Activated CD8-positive, alpha-beta memory T cell treated with anti-CD3 and anti-CD28 coated beads, Interleukin-2, amount 10 ng/mL, durations not matched to agents 7 days and 5 days (primary cell): ENCODE measurements at regions of chr10 and their contacts with region 1.

Region 1: GRCh38 chr10:5623081-5623748 is 43.2 kb downstream of the ASB13 start:
- DNase-seq: peak; percentile 88
- ATAC-seq: peak; percentile 97
- H3K4me3 Mint-ChIP-seq: no peak overlapping the region
- H3K27ac Mint-ChIP-seq: no peak overlapping the region
- H3K4me1 Mint-ChIP-seq: peaks cover 18% of the 10 kb centered on the region
- H3K27me3 Mint-ChIP-seq: peaks cover 6% of the 10 kb centered on the region

Region 2: GRCh38 chr10:5423771-5424170 is 199.4 kb before region 1 on chr10:
- CTCF ChIA-PET with region 1: interaction called, 10 read pairs
- DNase-seq: no peak
- ATAC-seq: no peak
- H3K4me3 Mint-ChIP-seq: no peak overlapping the region
- H3K27ac Mint-ChIP-seq: no peak overlapping the region
- H3K4me1 Mint-ChIP-seq: peaks cover 2% of the 10 kb centered on the region
- H3K27me3 Mint-ChIP-seq: no peaks in the 10 kb centered on the region

Region 3: DNA sequence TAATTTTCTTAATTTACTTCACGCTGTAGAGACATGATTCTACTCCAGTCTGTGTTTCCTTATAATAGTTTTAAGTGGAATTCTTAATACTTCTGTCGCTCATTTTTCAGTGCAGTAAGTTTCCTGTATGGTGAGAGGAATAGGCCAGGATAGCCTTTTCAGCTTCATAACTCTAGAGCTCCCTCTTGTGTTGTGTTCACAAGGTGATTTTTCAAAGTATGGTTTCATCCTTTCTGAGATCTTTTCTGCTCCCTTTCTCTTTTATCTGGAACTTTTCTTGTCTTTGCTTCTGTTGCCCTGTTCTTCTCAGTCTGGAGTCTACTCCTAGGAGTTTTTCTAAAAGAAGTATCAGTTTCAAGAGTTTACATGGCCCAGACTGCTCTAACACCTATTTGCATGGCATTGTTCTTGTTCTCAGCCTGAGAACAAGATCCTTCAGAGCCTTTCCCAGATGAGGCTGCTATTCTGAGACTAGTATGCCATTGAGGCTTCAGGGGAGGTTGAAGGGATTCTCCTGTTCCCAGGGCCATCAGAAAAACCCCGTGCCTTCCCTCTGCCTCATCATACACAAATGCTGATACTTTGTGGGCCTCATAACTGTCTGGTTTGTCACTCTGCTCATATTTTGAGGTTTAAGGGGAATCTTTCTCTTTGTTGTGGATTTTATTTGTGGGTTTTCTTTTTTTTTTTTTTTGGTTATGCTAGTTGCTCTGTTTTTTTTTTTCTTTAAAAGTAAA is 189.0 kb before region 1 on chr10:
- CTCF ChIA-PET with region 1: interaction called, 189 read pairs
- DNase-seq: no peak
- ATAC-seq: peak; percentile 63
- H3K4me3 Mint-ChIP-seq: no peak overlapping the region
- H3K27ac Mint-ChIP-seq: no peak overlapping the region
- H3K4me1 Mint-ChIP-seq: peaks cover 15% of the 10 kb centered on the region
- H3K27me3 Mint-ChIP-seq: no peaks in the 10 kb centered on the region

Region 4: DNA sequence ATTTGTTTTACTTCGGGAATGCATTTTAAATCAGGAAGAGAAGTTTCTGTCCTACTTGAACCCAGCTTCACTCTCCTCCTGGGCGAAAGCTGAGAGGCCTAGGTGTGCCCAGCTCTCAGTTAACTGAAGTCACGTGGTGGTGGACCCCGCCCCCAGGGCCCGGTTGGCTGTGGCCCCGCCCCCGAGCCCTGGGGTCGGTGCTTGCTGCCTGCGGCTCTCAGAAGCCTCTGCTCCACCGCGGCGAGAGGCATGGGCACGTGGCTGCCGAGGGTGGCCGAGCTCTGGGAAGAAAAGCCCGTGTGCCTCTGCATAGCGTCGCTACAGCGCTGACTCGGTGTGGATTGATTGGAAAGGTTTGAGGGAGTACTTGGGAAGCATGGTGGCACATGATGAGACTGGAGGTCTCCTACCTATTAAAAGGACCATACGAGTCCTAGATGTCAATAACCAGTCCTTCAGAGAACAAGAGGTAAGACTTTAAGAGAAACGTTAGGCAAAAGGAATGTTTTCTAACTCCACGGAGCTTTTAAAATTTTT is 176.8 kb before region 1 on chr10:
- CTCF ChIA-PET with region 1: interaction called, 189 read pairs
- DNase-seq: peak; percentile 82
- ATAC-seq: peak; percentile 46
- H3K4me3 Mint-ChIP-seq: peak overlapping the region; percentile 80
- H3K27ac Mint-ChIP-seq: peak overlapping the region; percentile 77
- H3K4me1 Mint-ChIP-seq: peaks cover 69% of the 10 kb centered on the region
- H3K27me3 Mint-ChIP-seq: no peaks in the 10 kb centered on the region

Region 5: DNA sequence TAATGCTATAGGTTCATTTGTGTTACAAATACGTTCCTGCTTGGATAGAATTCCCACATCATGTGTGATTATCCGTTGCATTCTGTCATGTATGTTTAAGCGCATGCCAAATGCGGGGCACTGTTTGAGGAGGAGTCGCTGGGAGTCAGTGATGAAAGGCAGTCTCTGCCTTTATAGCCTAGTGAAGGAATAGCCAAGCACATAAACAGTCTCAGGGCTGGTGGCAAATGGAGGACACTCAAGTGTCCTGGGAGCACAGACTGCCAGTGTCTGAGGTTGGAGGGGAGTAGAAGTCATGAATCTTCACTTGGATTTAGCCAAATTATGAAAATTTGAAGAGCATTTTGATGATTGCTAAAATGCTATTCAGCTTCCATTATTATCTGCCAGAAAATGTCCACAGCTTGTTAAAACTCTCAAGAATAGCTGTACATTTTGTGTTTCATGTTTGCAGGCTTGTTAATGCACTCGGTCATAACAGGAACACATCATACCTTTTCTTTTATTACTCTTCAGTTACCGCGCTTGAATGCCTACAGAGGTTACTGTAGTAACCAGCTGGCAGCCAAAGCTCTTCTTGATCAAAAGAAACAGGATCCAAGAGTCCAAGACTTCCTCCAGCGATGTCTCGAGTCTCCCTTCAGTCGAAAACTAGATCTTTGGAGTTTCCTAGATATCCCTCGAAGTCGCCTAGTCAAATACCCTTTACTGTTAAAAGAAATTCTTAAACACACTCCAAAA is 169.3 kb before region 1 on chr10:
- CTCF ChIA-PET with region 1: interaction called, 189 read pairs
- DNase-seq: no peak
- ATAC-seq: no peak
- H3K4me3 Mint-ChIP-seq: no peak overlapping the region
- H3K27ac Mint-ChIP-seq: no peak overlapping the region
- H3K4me1 Mint-ChIP-seq: peaks cover 12% of the 10 kb centered on the region
- H3K27me3 Mint-ChIP-seq: no peaks in the 10 kb centered on the region

Region 6: GRCh38 chr10:5548527-5549223 is 74.5 kb before region 1 on chr10:
- CTCF ChIA-PET with region 1: interaction called, 13 read pairs
- DNase-seq: peak; percentile 87
- ATAC-seq: peak; percentile 94
- H3K4me3 Mint-ChIP-seq: no peak overlapping the region
- H3K27ac Mint-ChIP-seq: no peak overlapping the region
- H3K4me1 Mint-ChIP-seq: peaks cover 33% of the 10 kb centered on the region
- H3K27me3 Mint-ChIP-seq: peaks cover 26% of the 10 kb centered on the region

Region 7: GRCh38 chr10:5576780-5577624 is 46.2 kb before region 1 on chr10:
- CTCF ChIA-PET with region 1: no interaction called
- DNase-seq: no peak
- ATAC-seq: no peak
- H3K4me3 Mint-ChIP-seq: no peak overlapping the region
- H3K27ac Mint-ChIP-seq: no peak overlapping the region
- H3K4me1 Mint-ChIP-seq: no peaks in the 10 kb centered on the region
- H3K27me3 Mint-ChIP-seq: peaks cover 16% of the 10 kb centered on the region